Posterior cingulate gyrus (tissue), 11 donors: ENCODE measurements at regions of chr7 and their contacts with region 1.

Region 1: DNA sequence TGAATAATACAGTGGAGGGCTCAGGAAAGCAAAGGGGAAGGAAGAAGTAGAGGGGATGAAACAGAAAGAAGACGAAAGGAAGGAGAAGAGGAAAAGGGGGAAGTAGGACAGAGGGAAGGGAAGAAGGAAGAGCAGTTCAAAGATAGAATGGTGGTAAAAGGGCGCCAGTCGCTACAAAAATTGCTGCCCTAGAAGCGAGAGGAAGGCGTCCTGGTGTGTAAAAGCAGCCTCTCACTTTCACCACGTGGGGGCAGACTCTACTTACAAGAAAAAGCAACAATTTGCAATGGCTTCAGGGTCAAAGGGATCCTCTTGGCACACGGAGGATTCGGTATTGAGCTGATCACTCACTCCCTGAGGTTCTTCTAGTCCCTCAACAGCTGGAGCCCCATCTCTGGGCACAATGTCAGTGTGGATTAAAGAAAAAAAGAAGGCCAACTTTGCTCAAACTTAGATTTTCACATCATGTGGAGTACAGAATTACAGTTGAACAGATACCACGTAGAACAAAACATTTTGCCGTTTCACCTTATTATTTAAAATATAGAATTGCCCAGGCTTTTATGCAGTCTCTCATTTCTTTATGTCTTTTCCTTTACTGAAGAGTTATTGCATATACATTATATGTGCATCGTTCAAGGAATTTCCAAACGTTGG is 31.4 kb upstream of the NPVF start:
- DNase-seq: peak in 8 of 10 donors; percentile 16 to 90 (median 60)

Region 2: GRCh38 chr7:25389489-25390106 is 129.9 kb after region 1 on chr7:
- intact Hi-C with region 1: loop called (anchors 1 kb)
- DNase-seq: no peak

Region 3: DNA sequence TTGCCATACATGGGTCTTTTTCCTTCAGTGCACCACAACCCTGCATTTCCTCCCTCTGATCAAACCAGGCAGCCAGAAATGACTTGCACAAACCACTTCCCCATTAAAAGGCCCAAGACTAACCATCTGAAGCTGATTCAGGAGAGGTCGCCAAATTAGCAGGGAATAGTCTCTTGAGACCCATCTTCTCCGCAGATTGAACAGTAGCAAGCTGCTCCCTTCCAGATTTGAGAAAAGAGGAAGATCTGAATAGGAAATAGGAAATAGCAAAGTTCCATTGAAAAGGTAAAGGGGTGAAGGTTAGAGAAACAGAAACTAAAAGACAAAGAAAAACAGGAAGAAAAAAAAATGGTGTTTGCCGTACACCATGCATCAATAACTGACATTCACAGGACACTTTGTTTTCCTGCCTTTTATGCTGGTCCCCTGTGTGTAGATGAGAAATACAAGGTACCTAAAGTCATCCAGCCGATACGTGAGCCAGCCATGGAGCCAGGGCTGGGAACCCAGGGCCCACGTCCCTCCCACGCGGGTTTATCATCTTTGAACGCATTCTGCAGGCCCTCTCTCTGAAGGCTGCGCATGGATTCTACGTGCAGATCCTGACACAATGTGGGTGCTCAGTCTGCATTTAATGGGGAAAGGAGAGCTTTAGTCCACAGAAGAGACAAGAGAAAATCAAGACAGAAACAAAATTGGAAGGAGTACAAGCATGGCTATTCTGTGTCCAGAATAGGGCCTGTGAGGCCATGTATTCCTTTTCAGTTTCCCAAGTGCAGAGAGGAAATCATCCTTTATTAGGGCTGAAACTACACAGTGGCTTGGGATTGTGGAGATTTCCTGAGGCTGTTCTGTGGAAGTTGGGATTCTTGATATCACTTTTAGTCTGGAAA is 237.0 kb after region 1 on chr7:
- intact Hi-C with region 1: no loop called
- DNase-seq: no peak

Region 4: GRCh38 chr7:25565949-25566348 is 306.2 kb after region 1 on chr7:
- intact Hi-C with region 1: loop called (anchors 1 kb)
- DNase-seq: peak in 9 of 10 donors; percentile 36 to 90 (median 59)